ENCODE measurements at regions of chr11 and their contacts with region 1.

Region 1: DNA sequence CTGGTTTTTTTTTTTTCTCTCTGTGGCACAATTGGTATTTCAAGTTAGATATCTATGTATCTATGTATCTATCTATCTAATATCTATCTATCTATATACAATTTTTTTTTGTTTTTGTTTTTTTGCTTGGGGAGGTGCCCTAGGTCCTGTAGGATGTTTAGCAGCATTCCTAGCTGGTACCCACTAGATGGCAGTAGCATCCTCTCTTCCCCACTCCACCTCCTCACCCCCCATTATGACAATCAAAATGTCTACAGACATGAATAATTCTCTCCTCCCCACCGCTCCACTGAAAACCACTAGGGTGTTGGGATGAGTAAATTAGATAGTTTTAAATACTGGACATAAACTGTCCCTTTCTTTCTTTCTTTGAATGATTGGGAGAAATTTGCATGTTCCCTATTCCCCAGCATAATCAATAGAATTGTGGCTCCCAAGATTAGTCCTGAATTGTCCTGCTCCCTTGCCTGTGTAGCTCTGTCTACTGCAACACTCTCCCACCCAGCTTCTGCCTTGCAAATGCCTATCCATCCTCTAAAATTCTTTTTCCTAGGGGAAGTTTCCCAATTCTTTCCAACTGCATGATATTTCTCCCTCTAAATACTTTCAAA is 1152.4 kb downstream of the LRRC4C start:
- ATAC-seq: peak in 4 of 8 experiments; percentile 47 to 86 (median 82)
- H3K4me3 ChIP-seq: no peak overlapping the region
- H3K27ac ChIP-seq: no peak overlapping the region
- H3K4me1 ChIP-seq: no peaks in the 10 kb centered on the region

Region 2: DNA sequence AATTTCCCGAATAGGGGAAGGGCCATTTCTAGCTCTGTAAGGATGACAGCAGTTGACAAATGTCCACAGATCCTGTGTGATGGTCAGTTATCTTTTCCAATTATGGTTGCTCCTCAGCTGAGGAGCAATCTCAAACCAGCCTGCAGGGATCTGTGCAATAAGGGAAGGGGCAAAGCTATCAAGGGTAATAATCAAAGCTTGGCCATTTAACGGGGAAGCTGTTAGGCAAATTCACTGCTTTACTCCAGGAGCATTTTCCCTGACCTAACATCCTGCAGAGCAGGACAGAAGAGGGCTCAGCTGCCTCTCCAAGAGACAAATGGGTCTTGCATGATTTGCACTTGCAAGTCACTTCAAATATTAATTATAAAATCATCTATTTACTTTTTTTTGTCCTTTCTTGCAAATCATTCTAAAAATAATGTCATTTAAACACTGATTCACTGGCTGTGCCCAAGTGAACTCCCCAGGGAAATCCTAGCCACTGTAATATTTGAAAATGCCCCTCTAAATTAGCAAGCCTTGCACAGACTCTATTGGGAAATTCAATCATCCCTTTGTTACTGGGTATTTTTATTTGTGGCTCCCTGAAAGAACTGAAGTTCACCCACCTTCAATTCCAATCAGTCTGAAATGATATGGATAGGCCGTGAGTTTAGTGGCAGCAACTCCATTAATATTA is 104.3 kb before region 1 on chr11:
- in situ Hi-C with region 1: no loop called
- ATAC-seq: peak in 5 of 8 experiments; percentile 47 to 96 (median 93)
- H3K4me3 ChIP-seq: no peak overlapping the region
- H3K27ac ChIP-seq: no peak overlapping the region
- H3K4me1 ChIP-seq: peaks cover 11 to 28% of the 10 kb centered on the region in 2 donors

Region 3: DNA sequence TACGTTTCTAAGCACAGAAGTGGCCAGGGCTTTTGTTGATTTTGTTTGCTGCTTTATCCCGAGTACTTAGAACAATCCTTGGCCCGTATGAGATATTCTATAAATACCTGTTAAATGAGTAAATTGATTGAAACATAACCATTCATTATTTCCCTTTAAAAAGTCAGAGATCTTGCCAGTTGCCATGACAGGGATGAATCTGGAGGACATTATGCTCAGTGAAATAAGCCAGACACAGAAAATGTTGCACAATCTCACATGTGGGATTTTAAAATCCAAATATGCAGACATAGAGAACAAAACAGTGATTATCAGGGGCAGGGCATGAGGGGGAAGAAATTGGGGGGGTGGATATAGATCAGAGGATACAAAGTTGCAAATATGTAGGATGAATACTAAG is 87.6 kb before region 1 on chr11:
- in situ Hi-C with region 1: no loop called
- ATAC-seq: peak in 1 of 8 experiments; percentile 27
- H3K4me3 ChIP-seq: no peak overlapping the region
- H3K27ac ChIP-seq: no peak overlapping the region
- H3K4me1 ChIP-seq: peaks cover 6 to 14% of the 10 kb centered on the region in 2 donors

Region 4: GRCh38 chr11:40434926-40435325 is 127.9 kb after region 1 on chr11:
- in situ Hi-C with region 1: no loop called
- ATAC-seq: no peak
- H3K4me3 ChIP-seq: no peak overlapping the region
- H3K27ac ChIP-seq: no peak overlapping the region
- H3K4me1 ChIP-seq: no peaks in the 10 kb centered on the region

Region 5: GRCh38 chr11:40732132-40732531 is 425.1 kb after region 1 on chr11:
- in situ Hi-C with region 1: loop called in 1 of 9 experiments (anchors 25 kb)
- ATAC-seq: peak in 1 of 8 experiments; percentile 81
- H3K4me3 ChIP-seq: no peak overlapping the region
- H3K27ac ChIP-seq: no peak overlapping the region
- H3K4me1 ChIP-seq: no peaks in the 10 kb centered on the region

Region 6: GRCh38 chr11:41175304-41175972 is 868.4 kb after region 1 on chr11:
- in situ Hi-C with region 1: loop called in 2 of 9 experiments (anchors 25 kb)
- ATAC-seq: peak in 1 of 8 experiments; percentile 50
- H3K4me3 ChIP-seq: no peak overlapping the region
- H3K27ac ChIP-seq: no peak overlapping the region
- H3K4me1 ChIP-seq: no peaks in the 10 kb centered on the region

Measured in motor neuron (in vitro differentiated cells).